Activated CD8-positive, alpha-beta memory T cell treated with anti-CD3 and anti-CD28 coated beads, Interleukin-2, amount 10 ng/mL, durations not matched to agents 7 days and 5 days (primary cell): ENCODE measurements at regions of chr11 and their contacts with region 1.

Region 1: DNA sequence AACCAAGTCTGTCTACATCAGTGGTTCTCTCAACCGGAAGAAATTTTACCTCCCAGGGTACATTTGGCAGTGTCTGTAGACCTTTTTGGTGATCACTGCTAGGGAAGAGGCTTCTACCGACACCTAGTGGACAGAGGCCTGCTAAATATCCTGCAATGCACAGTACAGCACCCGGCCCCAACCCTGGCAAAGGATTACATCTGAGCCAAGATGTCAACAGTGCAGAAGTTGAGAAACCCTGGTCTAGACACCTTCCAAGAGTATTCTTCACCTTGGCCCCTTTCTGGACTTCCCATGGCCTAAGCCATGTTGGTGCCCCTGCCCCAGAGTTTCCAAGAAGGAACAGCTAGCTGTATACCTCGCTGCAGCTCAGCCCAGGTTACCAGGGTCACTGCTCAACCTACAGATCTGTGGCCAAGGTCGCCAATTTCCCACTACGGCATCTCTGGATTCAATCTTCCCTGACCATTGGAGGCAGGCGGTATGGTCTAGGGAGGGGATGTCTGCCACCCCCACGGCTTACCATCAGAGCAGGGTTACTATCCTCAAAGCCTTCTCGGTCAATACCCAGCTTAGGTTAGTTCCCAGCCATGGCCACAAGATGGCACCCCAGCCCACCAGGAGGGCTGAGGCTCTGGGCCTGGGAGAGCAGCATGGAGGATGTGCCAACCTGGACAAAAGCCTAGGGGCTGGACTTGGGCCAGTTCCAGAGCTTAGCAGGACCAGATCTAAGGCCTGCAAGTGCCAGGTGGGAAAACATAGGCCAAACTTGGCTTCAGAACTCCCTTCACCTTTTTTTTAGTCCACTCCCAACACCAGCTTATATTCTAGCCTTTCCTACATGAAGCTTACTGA is 3.7 kb upstream of the KCNC1 start:
- DNase-seq: peak; percentile 76
- ATAC-seq: peak; percentile 81
- H3K4me3 Mint-ChIP-seq: no peak overlapping the region
- H3K27ac Mint-ChIP-seq: no peak overlapping the region
- H3K4me1 Mint-ChIP-seq: peaks cover 4% of the 10 kb centered on the region
- H3K27me3 Mint-ChIP-seq: peaks cover 55% of the 10 kb centered on the region

Region 2: GRCh38 chr11:17598700-17599459 is 132.0 kb before region 1 on chr11:
- CTCF ChIA-PET with region 1: interaction called, 12 read pairs
- DNase-seq: peak; percentile 79
- ATAC-seq: peak; percentile 86
- H3K4me3 Mint-ChIP-seq: no peak overlapping the region
- H3K27ac Mint-ChIP-seq: no peak overlapping the region
- H3K4me1 Mint-ChIP-seq: peaks cover 3% of the 10 kb centered on the region
- H3K27me3 Mint-ChIP-seq: peaks cover 4% of the 10 kb centered on the region

Region 3: DNA sequence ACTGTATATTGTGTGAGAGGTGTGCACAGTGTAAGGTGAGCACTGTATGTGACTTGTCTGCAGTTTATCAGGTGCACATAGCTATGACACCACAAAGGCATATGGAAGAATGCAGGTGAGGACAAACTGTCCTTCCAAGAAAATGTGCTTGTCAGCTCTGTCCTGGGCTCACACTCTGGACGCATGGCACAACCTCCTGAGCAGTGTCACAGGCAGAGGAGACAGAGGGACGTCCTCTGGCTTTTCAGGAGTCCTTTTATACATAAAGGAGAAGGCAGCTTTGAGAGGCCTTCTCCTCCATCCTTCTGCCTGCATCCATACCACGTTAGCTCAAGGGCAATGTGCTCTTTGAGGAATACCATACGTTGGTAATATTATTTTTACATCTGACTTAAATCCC is 19.0 kb before region 1 on chr11:
- CTCF ChIA-PET with region 1: no interaction called
- DNase-seq: no peak
- ATAC-seq: no peak
- H3K4me3 Mint-ChIP-seq: no peak overlapping the region
- H3K27ac Mint-ChIP-seq: no peak overlapping the region
- H3K4me1 Mint-ChIP-seq: no peaks in the 10 kb centered on the region
- H3K27me3 Mint-ChIP-seq: peaks cover 8% of the 10 kb centered on the region